ENCODE measurements at regions of chr18 and their contacts with region 1.

Region 1: DNA sequence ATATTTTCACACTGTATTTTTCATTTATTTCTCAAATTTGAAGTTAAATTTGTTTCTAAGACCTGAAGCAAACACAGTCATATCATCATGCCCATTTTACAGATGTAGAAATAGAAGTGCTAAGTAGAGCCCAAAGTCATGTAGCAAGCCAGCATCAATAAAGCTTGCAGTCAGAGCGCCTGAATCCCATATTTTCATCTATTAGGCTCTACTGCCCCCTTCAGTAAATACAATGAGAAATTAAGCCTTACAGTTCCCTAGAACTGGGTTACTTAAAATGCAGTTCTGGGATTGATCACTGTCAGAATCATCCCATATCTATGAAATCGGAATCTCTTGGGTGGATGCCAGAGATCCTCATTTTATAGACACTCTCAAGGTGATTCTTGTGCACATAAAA is 419.9 kb downstream of the TGIF1 start:
- DNase-seq: peak; percentile 90
- H3K4me3 ChIP-seq: peak overlapping the region; percentile 10
- H3K27ac ChIP-seq: peak overlapping the region; percentile 88
- H3K4me1 ChIP-seq: peaks cover 74% of the 10 kb centered on the region
- H3K27me3 ChIP-seq: no peaks in the 10 kb centered on the region
- CTCF ChIP-seq: peak; percentile 72

Region 2: DNA sequence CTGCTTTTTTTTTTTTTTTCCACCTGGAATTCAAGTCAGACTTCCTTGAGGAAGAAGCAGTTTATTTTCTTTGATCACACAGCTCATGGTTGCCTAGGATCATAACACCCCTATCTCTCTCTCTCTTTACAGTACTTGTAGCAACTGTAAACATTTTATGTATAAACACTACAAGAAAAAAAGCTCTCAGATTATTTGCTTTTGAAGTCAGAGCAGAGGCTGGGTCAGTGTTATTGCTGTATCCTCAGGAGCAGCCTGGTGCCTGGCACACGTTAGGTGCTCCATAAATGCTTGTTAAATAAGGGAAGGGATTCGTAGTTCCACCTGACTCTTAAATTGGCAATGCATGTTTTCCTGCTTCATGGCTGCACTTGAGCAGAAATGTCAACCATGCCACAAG is 198.7 kb before region 1 on chr18:
- CTCF ChIA-PET with region 1: interaction called, 5 read pairs
- POLR2A ChIA-PET with region 1: no interaction called
- intact Hi-C with region 1: loop called (anchors 2 kb)
- DNase-seq: no peak
- H3K4me3 ChIP-seq: no peak overlapping the region
- H3K27ac ChIP-seq: peak overlapping the region; percentile 69
- H3K4me1 ChIP-seq: peaks cover 47% of the 10 kb centered on the region
- H3K27me3 ChIP-seq: no peaks in the 10 kb centered on the region
- CTCF ChIP-seq: no peak

Region 3: DNA sequence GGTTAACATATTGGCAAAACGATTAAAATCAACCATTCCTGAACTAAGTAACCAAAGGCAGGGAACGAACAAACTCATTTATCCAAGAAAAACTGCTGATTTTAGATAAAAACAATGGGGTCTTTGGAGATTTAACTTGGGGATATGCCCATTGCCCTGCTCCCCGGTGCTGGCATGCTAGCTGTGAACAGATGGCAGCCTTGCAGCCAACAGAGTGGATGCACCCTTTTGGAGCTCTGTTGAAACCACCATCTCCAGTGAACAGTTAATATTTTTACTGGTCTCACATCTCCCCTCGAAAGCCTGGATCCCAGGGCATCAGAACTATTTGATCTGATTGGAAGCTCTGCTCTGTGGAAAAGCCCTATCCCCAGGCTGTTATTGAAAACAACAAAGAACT is 116.7 kb before region 1 on chr18:
- CTCF ChIA-PET with region 1: no interaction called
- POLR2A ChIA-PET with region 1: no interaction called
- intact Hi-C with region 1: no loop called
- DNase-seq: no peak
- H3K4me3 ChIP-seq: no peak overlapping the region
- H3K27ac ChIP-seq: no peak overlapping the region
- H3K4me1 ChIP-seq: no peaks in the 10 kb centered on the region
- H3K27me3 ChIP-seq: no peaks in the 10 kb centered on the region
- CTCF ChIP-seq: no peak

Region 4: DNA sequence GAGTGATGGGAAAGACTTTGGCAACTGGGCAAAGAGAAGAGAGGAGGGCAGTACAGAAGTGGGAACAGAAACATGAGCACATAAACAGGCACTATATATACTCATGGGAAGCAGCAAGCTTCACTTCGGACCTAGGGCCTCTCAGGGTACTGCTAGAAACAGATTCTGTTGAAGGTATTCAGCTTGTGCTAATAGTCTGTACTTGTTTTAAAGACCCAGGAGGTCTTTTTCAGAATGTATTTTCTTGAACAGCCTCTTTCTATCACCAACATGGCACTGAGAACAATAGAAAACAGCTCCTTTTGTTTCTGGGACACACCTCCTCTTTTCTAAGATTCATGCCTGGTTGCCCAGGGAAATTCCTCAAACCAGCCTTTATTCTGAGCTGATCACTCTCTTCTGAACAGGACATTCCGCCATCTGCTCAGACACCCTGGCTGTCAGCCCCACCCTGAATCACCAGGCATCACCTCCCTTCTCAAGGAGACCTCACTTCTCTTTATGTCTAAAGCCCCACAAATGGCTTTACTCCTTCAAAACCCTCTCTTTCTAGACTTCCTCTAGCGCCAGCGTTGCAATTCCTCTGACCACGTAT is 30.3 kb before region 1 on chr18:
- CTCF ChIA-PET with region 1: interaction called, 11 read pairs
- POLR2A ChIA-PET with region 1: interaction called, 15 read pairs
- intact Hi-C with region 1: no loop called
- DNase-seq: peak; percentile 64
- H3K4me3 ChIP-seq: peak overlapping the region; percentile 54
- H3K27ac ChIP-seq: peak overlapping the region; percentile 98
- H3K4me1 ChIP-seq: peaks cover 84% of the 10 kb centered on the region
- H3K27me3 ChIP-seq: no peaks in the 10 kb centered on the region
- CTCF ChIP-seq: no peak

Region 5: GRCh38 chr18:3995476-3996102 is 125.7 kb after region 1 on chr18:
- CTCF ChIA-PET with region 1: interaction called, 5 read pairs
- POLR2A ChIA-PET with region 1: no interaction called
- intact Hi-C with region 1: loop called (anchors 1 kb)
- DNase-seq: peak; percentile 93
- H3K4me3 ChIP-seq: peak overlapping the region; percentile 13
- H3K27ac ChIP-seq: peak overlapping the region; percentile 83
- H3K4me1 ChIP-seq: peaks cover 48% of the 10 kb centered on the region
- H3K27me3 ChIP-seq: no peaks in the 10 kb centered on the region
- CTCF ChIP-seq: peak; percentile 92

Measured in A673 (cell line).